GM13977 (cell line): ENCODE measurements at regions of chr17 and their contacts with region 1.

Region 1: DNA sequence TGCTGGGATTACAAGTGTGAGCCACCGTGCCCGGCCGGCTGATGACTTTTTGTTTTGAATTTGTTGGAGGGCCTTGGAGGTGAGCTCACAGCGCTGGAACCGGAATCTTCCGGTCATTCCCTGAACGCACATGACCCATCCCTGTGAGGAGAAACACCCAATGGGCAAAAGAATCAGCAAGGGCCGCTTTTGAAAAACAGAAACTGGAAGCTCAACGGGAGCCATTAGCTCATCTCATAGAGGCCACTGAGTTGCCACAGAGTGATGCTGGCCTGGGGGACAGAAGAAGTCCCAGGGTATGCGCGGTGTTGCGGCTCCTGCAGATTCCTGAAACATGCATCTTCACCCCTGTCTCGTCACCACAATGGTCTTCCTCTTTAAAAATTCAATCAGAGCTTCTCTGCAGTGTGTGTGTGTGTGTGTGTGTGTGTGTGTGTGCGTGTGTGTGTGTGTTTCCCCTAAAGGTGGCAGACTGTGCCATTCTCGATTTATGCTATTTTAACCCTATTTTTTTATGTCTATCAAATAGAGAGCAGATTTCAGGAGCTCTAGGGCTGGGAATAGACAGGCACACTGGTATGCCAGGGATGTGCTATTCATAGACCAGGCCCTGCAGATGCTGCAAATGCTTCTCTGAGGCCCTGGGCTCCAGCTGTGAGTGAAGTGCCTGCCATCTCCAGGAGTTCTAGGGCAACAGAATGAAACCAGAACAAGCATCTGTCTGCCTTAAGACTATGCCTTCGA is 68.3 kb downstream of the MARCHF10 start:
- DNase-seq: no peak
- CTCF ChIP-seq: no peak

Region 2: DNA sequence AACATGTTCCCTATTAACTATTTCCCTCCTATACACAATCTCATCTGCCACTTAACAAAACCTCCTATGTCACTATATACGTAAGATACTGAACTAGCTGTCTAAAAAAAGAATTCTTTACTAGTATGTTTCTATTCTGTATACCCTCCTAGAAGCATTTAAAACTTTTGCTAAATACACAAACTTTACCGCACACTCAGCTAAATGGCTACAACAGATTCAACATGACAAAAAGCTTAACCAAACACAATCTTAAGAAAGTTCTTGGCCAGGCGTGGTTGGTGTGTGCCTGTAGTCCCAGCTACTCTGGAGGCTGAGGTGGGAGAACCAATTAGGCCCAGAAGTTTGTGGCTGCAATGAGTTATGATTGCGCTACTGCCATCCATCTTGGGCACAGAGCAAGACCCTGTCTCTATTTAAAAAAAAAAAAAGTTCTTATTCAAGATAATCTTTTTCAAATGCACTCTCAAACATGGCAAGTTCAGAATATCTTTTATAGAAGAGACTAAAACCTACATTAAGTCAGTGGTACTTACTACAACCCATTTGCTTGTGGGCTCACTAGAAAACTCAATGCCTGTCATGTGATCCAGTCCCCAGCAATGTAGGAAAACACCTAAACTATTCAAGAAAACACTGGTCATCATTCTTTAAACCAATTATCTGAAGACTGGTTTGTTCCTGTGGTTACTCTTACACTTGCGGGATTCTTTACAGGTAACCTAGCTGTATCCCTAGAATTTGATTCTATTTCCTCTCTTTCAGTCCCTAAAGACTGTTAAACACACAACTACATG is 694.5 kb before region 1 on chr17:
- in situ Hi-C with region 1: no loop called
- DNase-seq: no peak
- CTCF ChIP-seq: no peak

Region 3: DNA sequence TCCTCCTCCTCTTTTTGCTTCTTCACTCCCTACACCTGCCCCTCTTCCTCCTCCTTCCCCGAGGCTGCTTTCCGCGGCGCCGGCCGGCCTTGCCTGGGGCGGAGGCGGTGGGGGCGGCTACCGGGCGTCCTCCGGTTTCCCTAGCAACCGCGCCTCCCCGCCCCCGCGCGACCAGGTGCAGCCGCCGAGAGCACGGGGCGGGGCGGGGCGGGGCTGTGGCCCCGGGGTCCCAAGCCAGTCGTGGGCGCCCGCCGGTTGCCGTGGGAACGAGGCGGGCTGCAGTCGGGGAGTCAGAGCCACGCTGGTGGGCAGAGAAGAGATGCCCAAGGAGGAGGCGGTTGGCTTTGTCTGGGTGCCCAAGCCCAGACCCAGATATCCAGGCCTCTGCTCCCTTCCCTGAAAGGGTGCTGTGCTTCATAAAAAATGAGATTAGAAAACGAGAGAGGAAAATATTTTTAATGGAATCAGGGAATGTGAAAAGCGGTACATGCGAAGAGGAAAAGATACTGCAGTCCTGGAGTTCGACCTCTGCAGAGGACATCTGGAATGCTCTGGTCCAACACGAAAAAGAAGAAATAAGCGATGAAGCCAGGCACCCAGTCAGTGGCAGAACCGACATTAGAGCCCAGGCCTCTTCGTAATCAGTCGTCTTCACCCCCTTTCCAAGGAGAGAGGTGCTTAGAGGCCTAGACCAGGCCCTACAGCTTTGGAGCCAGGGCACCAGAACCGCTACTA is 68.5 kb after region 1 on chr17 and contains the start of gene MARCHF10:
- in situ Hi-C with region 1: loop called (anchors 10 kb)
- DNase-seq: peak; percentile 69
- CTCF ChIP-seq: no peak